ENCODE measurements at regions of chr17 and their contacts with region 1.

Region 1: DNA sequence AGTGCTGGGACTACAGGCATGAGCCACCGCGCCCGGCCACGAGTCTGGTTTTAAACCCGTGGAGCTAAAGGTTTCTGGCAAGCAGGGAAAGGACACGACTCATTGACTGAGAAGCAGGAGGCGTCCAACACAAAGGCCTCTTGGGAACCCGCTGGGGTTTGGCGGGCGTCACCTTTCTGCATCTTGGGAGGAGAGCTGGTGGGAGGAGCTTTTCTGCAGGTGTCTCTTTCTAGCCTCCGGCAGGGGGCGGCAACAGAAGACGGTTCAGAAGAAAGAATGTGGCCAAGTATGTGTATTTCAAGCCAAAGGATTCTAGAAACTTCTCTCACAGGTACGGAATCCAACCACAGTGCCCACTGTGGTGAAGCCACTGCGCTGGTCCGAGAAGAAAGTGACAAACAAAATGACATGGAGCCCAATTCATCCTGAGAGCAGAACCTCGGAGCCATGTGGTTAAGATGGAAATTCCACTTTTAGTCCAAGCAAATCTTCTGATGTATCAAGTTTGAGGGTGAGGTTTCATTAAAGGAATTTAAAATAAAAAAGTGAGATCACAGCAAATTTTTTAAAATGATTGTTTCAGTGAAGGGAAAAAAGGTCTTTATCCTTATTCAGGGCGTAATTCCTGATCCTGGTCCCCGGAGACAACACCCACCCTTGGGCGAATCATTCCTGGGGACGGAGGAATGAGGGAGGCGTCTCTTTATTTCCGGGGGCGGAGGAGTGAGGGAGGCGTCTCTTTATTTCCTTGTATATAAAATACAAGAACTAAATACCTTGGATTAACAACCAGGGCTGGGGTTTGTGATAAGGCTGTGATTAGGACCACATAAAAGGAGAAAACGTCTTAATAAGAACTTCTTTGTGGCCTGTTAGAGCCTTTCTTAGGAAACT is 97.6 kb downstream of the MRM3 start:
- H3K4me3 ChIP-seq: no peak overlapping the region
- H3K27ac ChIP-seq: no peak overlapping the region
- H3K4me1 ChIP-seq: peaks cover 17% of the 10 kb centered on the region
- CTCF ChIP-seq: peak; percentile 64

Region 2: GRCh38 chr17:835263-835662 is 44.5 kb before region 1 on chr17:
- CTCF ChIA-PET with region 1: no interaction called
- POLR2A ChIA-PET with region 1: no interaction called
- H3K4me3 ChIP-seq: no peak overlapping the region
- H3K27ac ChIP-seq: no peak overlapping the region
- H3K4me1 ChIP-seq: no peaks in the 10 kb centered on the region
- CTCF ChIP-seq: no peak

Region 3: DNA sequence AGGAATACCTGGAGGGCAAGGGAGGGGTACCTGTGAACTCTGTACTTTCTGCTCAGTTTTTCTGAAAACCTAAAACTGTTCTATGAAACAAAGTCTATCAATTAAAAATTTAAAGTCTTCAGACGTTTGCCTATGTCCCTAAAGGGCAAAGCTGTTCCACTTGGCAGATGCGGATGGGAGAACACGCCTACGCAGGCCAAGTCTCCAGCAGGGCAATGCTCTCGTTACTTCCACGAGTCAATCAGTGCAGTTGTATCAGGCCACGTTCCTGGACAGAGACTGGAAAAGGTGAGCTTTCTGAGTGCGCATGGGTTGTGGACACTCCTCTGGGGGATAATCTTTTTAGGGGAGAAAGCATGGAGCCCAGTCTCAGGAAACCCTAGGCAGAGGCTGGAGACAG is 13.2 kb after region 1 on chr17:
- CTCF ChIA-PET with region 1: interaction called, 12 read pairs
- POLR2A ChIA-PET with region 1: no interaction called
- H3K4me3 ChIP-seq: no peak overlapping the region
- H3K27ac ChIP-seq: no peak overlapping the region
- H3K4me1 ChIP-seq: no peaks in the 10 kb centered on the region
- CTCF ChIP-seq: no peak

Region 4: DNA sequence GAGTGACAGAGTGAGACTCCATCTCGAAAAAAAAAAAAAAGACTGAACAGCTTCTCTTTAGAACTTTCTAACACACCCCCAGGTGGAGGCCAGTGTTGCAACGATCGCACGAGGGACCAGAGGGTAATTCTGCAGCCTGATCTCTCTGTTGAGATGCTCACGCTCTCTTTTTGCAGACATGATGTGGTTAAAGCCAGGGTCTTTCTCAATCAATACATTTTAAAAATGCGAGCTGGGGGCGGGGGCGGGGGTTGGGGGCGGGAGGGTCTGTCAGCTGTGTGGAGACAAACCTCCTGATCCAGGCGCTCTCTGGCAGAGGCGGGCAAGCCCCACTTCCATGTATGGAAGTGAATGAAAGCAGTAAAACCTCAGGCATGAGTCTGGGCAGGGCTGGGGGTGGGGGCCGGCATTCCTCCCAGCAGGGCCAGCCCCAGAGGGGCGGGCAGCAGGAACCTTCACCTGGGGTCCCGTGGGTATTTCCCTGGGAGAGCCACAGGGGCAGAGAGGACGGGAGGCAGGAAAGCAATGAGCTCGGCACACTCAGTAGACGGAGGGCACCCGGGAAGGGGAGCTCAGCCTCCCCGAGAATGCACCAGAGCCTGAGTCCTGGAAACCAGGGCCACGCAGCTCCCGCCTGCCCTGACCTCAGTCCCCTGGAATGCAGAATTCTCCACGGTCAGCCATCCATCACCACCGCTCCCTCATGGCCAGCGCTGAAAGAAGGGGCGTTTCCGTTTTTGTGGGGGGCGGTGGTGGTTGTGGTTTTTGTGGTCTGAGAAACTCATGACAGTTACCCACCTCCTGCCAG is 71.7 kb after region 1 on chr17:
- CTCF ChIA-PET with region 1: interaction called, 7 read pairs
- POLR2A ChIA-PET with region 1: interaction called, 14 read pairs
- H3K4me3 ChIP-seq: peak overlapping the region; percentile 24
- H3K27ac ChIP-seq: 0 out of 2 replicates have a peak overlapping the region, but pooled peaks have one; percentile 11
- H3K4me1 ChIP-seq: peaks cover 14% of the 10 kb centered on the region
- CTCF ChIP-seq: no peak

Region 5: GRCh38 chr17:1019451-1019850 is 139.7 kb after region 1 on chr17:
- CTCF ChIA-PET with region 1: no interaction called
- POLR2A ChIA-PET with region 1: no interaction called
- H3K4me3 ChIP-seq: no peak overlapping the region
- H3K27ac ChIP-seq: no peak overlapping the region
- H3K4me1 ChIP-seq: no peaks in the 10 kb centered on the region
- CTCF ChIP-seq: no peak

Measured in HEK293 (cell line).